Lower leg skin (tissue), 4 donors: ENCODE measurements at regions of chr1 and their contacts with region 1.

Region 1: DNA sequence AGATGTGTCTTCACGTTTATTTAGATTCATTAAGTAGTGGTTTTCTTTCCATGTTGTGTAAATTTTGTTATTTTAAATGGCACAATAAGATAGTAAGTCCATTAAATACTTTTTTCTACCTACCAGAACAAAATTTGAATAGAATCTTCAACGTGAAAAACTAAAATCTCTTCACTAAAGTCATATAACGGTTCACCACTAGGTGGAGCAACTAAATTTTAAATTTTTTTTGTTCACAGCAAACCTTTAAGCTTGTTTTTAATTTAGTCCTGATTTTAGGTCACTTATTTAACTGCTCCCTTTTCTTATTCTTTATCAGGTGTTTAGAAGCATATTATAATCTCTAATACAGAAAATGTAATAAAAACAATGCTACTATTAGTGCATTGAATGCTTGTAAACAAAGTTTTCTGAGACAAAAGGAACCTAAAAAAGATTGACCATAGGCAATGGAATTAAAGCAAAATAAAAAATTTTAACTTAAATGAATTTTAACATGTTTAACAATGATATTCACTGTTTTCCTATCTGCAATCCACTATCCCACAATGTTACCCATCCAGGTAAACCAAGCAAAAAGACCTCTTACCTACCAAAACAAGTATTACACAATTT is 28.3 kb upstream of the PKN2 start:
- DNase-seq: no peak
- H3K4me3 ChIP-seq: no peak overlapping the region
- CTCF ChIP-seq: no peak
- POLR2A ChIP-seq: no peak

Region 2: DNA sequence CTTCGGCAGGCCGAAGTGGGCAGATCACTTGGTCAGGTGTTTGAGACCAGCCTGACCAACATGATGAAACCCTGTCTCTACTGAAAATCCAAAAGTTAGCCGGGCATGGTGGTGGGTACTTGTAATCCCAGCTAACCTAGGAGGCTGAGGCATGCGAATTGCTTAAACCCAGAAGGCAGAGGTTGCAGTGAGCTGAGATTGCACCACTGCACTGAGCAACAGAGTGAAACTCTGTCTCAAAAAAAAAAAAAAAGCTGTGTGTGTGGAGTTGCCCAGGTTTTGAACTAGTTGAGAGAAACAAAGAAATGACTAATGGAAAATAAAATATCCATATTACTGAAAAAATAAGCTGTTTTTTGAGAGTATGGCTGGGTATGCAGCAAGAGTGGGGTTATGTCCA is 135.4 kb after region 1 on chr1:
- intact Hi-C with region 1: no loop called
- DNase-seq: no peak
- H3K4me3 ChIP-seq: no peak overlapping the region
- CTCF ChIP-seq: no peak
- POLR2A ChIP-seq: no peak

Region 3: DNA sequence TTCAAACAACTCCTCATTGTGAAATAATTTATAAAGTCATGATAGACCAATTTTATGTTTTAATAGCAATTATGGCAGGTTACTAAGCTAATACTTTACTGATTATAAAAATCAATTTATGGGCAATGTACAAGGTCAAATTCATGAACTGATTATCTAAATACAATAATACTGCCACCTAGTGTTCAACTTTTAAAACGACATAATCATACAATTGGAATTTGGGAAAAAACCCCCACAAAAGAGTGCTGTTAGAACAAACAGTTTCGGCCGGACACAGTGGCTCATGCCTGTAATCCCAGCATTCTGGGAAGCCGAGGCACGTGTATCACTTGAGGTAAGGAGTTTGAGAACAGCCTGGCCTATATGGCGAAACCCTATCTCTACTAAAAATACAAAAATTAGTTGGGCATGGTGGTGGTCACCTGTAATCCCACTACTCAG is 221.6 kb after region 1 on chr1:
- intact Hi-C with region 1: loop called (anchors 5 kb)
- DNase-seq: no peak
- H3K4me3 ChIP-seq: no peak overlapping the region
- CTCF ChIP-seq: no peak
- POLR2A ChIP-seq: no peak